GM13976 (cell line): ENCODE measurements at regions of chr17 and their contacts with region 1.

Region 1: GRCh38 chr17:14926526-14927122 is 338.5 kb downstream of the PMP22 start:
- DNase-seq: peak; percentile 41
- CTCF ChIP-seq: peak; percentile 56

Region 2: DNA sequence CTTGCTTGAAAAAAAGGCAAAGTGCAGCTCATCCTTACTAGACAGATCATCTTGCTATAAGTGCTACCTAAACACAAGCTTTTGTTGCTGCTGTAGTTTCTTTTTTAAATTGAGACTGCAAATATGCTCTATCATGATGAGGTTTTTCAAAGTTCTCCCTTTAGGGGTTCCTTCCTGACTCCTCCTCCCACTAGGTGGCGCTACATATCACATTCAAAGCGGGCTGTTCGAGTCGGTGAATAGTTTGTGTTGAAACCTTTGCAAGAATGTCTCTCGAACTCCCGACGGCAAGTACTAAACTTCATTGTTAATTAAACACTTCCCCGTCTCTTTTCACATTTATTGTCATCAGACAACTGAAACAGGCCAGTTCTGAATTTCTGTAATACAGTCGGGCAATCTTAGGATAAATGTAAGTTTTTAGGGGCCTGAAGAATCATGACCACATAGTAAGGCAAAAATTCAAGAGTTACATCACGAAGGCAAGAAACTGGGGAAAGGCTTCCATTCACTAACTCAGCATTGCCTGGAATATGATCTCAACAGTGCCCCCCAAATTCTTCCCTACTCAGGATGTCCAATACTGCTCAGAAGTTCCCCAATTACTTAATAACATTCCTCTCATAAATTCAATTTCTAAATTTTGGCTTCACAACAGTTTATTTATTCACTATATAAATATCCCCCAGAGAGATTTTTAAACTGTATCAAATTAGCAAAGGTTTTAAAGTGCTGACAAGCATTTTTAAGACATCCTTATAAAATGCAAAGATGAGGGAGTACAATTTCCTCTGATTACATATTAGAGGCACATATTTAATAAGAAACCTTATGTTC is 1331.6 kb before region 1 on chr17:
- in situ Hi-C with region 1: loop called (anchors 10 kb)
- DNase-seq: peak; percentile 67
- CTCF ChIP-seq: peak; percentile 83

Region 3: DNA sequence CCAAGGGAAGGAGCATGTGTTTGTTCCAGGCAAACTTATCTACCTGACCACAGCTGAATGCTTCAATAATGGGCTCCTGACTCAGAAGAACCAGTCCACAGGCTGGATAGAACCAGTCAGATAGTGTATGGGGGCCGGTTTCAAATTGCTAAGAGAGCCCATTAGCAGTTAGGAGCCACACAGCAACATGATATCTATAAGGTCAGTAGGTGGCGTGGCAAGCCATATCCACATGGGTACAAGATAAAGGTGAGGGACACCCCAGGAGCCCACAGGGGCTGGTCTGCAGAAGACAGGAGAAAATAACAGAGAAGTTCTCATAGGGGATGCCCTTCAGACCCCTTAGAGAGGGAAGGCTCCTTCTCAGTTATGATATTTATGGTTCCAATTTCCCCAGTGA is 658.4 kb before region 1 on chr17:
- in situ Hi-C with region 1: loop called (anchors 25 kb)
- DNase-seq: no peak
- CTCF ChIP-seq: peak; percentile 12